Dendritic cell treated with granulocyte-macrophage colony-stimulating factor and Interleukin-4, amounts not matched to agents 40 ng/mL and 50 ng/mL, for 4 days (primary cell): ENCODE measurements at regions of chr12 and their contacts with region 1.

Region 1: DNA sequence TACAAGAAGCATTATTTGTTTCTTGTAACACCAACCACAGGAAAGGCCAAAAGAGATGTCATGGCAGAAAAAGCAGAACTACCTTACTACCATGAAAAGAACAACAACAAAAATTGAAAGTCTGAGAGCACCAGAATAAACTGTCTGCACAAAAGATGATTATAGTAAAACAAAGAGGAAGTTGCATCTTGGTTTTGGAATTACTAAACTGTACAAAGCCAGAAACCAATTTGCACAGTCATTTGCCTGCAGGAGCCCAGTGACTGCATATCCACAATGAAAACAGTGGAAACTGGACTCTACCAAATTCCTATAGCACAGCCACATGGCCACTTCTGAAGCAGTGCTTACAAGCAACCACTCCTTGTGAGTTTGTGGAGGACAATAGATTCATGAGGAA is 276.2 kb downstream of the SSPN start:
- H3K4me3 Mint-ChIP-seq: no peak overlapping the region
- H3K27ac Mint-ChIP-seq: peak overlapping the region; percentile 69
- H3K4me1 Mint-ChIP-seq: peaks cover 55% of the 10 kb centered on the region
- H3K27me3 Mint-ChIP-seq: no peaks in the 10 kb centered on the region

Region 2: GRCh38 chr12:25250744-25251730 is 1220.5 kb before region 1 on chr12 and contains the start of gene KRAS:
- intact Hi-C with region 1: loop called (anchors 5 kb)
- H3K4me3 Mint-ChIP-seq: peak within 1 kb of the TSS; percentile 94
- H3K27ac Mint-ChIP-seq: peak within 1 kb of the TSS; percentile 93
- H3K4me1 Mint-ChIP-seq: peaks cover 15% of the 10 kb centered on the region
- H3K27me3 Mint-ChIP-seq: peaks cover 7% of the 10 kb centered on the region

Region 3: GRCh38 chr12:26113853-26114719 is 357.5 kb before region 1 on chr12:
- intact Hi-C with region 1: loop called (anchors 5 kb)
- H3K4me3 Mint-ChIP-seq: peak overlapping the region; percentile 74
- H3K27ac Mint-ChIP-seq: peak overlapping the region; percentile 76
- H3K4me1 Mint-ChIP-seq: peaks cover 29% of the 10 kb centered on the region
- H3K27me3 Mint-ChIP-seq: peaks cover 38% of the 10 kb centered on the region